ENCODE measurements at regions of chr3 and their contacts with region 1.

Region 1: GRCh38 chr3:55571913-55572312 is 84.8 kb upstream of the WNT5A start:
- DNase-seq: peak; percentile 68 to 88 (median 88)
- ATAC-seq: peak; percentile 91 to 92
- H3K4me3 ChIP-seq: no peak overlapping the region
- H3K27ac ChIP-seq: no peak overlapping the region
- H3K4me1 ChIP-seq: peaks cover 4% of the 10 kb centered on the region
- H3K27me3 ChIP-seq: no peaks in the 10 kb centered on the region

Region 2: DNA sequence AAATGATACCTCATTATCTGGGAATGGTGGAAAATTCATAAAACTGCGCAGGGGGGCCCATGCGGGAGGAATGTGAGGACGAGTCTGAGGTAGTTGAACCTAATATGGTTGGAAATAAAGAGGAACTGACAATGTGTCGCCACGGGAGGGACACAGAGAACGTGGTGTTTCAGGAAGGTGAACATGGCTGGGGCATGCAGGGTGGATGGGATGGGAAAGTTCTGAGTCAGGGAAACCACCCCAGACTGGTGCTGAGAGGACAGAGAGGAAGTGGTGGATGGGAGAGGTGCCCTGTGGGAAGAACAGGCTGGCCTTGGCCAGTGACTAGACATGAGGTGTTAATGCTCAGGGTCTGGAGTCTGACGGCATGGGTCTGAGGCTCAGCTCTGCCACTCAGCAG is 52.3 kb after region 1 on chr3:
- intact Hi-C with region 1: no loop called
- DNase-seq: peak in 2 of 3 donors; percentile 28 to 49
- ATAC-seq: peak; percentile 36 to 54
- H3K4me3 ChIP-seq: no peak overlapping the region
- H3K27ac ChIP-seq: no peak overlapping the region
- H3K4me1 ChIP-seq: no peaks in the 10 kb centered on the region
- H3K27me3 ChIP-seq: no peaks in the 10 kb centered on the region

Region 3: GRCh38 chr3:55704521-55704920 is 132.6 kb after region 1 on chr3:
- intact Hi-C with region 1: loop called in 1 of 4 experiments (anchors 10 kb)
- DNase-seq: no peak
- ATAC-seq: no peak
- H3K4me3 ChIP-seq: no peak overlapping the region
- H3K27ac ChIP-seq: no peak overlapping the region
- H3K4me1 ChIP-seq: peaks cover 2% of the 10 kb centered on the region
- H3K27me3 ChIP-seq: no peaks in the 10 kb centered on the region